CD4-positive, alpha-beta memory T cell (primary cell): ENCODE measurements at regions of chrX and their contacts with region 1.

Region 1: GRCh38 chrX:154136627-154137161 is 7.3 kb upstream of the OPN1LW start:
- DNase-seq: peak; percentile 69 to 76 (median 71)
- H3K4me3 ChIP-seq: peak overlapping the region in 1 of 2 donors; percentile 15
- H3K4me3 Mint-ChIP-seq: peak overlapping the region; percentile 62 to 86 (median 77)
- H3K27ac ChIP-seq: peak overlapping the region; percentile 71
- H3K27ac Mint-ChIP-seq: peak overlapping the region; percentile 80 to 99 (median 96)
- H3K4me1 ChIP-seq: peaks cover 42% of the 10 kb centered on the region
- H3K4me1 Mint-ChIP-seq: peaks cover 6 to 40% (median 16%) of the 10 kb centered on the region in 4 donors
- H3K27me3 ChIP-seq: no peaks in the 10 kb centered on the region
- H3K27me3 Mint-ChIP-seq: no peaks in the 10 kb centered on the region

Region 2: DNA sequence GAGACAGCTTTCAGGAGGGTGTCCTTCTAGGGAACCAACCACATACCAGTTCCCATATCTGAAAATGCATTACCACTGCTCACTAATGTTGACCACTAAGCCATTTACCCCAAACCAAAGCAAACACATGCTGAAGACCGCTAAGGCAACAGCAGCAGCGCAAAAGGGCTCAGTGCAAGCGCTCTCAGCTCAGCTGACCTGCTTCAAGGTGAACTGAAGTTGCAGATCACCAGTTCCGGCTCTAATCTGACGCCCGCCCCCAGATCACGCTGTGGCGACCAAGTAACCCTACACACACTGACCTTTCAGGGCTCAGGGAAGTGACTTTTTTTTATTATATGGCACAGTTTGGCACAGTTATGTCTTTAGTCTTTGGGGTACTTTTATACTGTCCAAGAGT is 45.0 kb before region 1 on chrX:
- CTCF ChIA-PET with region 1: interaction called, 8 read pairs
- POLR2A ChIA-PET with region 1: interaction called, 14 read pairs
- intact Hi-C with region 1: no loop called
- DNase-seq: no peak
- H3K4me3 ChIP-seq: no peak overlapping the region
- H3K4me3 Mint-ChIP-seq: peak overlapping the region in 4 of 8 donors; percentile 37 to 61 (median 50)
- H3K27ac ChIP-seq: peak overlapping the region; percentile 34
- H3K27ac Mint-ChIP-seq: peak overlapping the region in 3 of 7 donors; percentile 25 to 72 (median 63)
- H3K4me1 ChIP-seq: peaks cover 68% of the 10 kb centered on the region
- H3K4me1 Mint-ChIP-seq: peaks cover 43 to 73% (median 53%) of the 10 kb centered on the region in 4 donors
- H3K27me3 ChIP-seq: no peaks in the 10 kb centered on the region
- H3K27me3 Mint-ChIP-seq: no peaks in the 10 kb centered on the region

Region 3: DNA sequence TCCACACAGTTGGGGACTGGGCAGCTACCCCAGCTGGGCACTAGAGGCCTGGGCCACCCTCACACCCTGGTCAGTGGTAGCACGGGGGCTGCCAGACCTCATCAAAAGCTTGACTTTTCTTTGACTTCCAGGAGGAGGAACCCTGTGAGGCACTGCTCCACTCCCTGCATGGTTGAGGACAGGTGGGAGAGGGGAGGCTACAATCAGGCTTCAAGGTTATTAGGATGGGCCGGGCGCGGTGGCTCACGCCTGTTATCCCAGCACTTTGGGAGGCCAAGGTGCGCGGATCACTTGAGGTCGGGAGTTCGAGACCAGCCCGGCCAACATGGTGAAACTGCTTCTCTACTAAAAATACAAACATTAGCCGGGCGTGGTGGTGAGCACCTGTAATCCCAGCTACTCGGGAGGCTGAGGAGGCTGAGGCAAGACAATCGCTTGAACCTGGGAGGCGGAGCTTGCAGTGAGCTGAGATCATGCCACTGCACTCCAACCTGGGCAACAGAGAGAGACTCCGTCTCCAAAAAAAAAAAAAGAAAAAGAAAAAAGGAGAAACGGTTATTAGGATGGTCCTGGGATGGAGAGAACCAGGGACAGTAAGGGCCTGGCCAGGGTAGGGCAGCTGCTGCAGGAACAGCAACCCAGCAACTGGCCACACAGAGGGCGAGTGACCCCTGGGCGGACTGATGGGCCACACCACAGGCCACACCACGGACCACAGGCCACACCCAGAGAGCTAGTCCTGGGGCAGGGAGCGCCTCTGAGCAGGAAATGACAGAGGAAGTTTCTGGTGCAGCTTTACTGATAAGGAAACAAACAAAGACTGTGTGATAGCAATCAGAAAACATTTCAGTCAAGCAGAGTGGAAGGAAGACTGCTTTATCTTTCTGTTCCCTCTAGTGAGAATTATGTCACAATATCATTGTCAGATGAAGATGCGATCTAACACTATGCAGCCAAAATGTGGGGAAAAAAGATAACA is 13.2 kb before region 1 on chrX:
- CTCF ChIA-PET with region 1: interaction called, 31 read pairs
- POLR2A ChIA-PET with region 1: interaction called, 50 read pairs
- intact Hi-C with region 1: no loop called
- DNase-seq: peak; percentile 48 to 64 (median 58)
- H3K4me3 ChIP-seq: no peak overlapping the region
- H3K4me3 Mint-ChIP-seq: peak overlapping the region; percentile 33 to 79 (median 66)
- H3K27ac ChIP-seq: no peak overlapping the region
- H3K27ac Mint-ChIP-seq: peak overlapping the region; percentile 19 to 86 (median 73)
- H3K4me1 ChIP-seq: peaks cover 37% of the 10 kb centered on the region
- H3K4me1 Mint-ChIP-seq: peaks cover 11 to 46% (median 20%) of the 10 kb centered on the region in 4 donors
- H3K27me3 ChIP-seq: no peaks in the 10 kb centered on the region
- H3K27me3 Mint-ChIP-seq: no peaks in the 10 kb centered on the region